B cell (primary cell): ENCODE measurements at regions of chr10 and their contacts with region 1.

Region 1: GRCh38 chr10:12048547-12048946 is 5.9 kb upstream of the UPF2 start:
- DNase-seq: no peak
- ATAC-seq: no peak
- H3K4me3 ChIP-seq: no peak overlapping the region
- H3K4me3 Mint-ChIP-seq: no peak overlapping the region
- H3K27ac ChIP-seq: no peak overlapping the region
- H3K27ac Mint-ChIP-seq: peak overlapping the region; percentile 39
- H3K4me1 ChIP-seq: peaks cover 25 to 44% of the 10 kb centered on the region in 2 donors
- H3K4me1 Mint-ChIP-seq: peaks cover 45% of the 10 kb centered on the region
- H3K27me3 ChIP-seq: no peaks in the 10 kb centered on the region
- H3K27me3 Mint-ChIP-seq: no peaks in the 10 kb centered on the region
- CTCF ChIP-seq: no peak

Region 2: DNA sequence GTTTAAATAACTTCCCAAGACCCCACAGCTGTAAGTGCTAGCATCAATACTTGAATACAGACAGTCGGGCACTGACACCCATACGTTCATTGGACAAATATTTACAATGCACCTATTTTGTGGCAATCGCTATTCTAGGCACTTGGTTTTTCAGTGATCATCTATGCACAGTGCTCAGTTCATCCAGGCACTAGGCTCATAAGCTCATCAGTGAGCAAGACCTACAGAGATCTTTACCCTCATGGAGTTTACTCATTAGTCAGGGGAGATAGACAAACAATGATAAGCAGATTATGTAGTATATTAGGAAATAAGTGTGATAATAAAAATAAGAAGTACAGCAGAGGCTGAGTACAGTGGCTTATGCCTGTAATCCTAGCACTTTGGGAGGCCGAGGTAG is 12.6 kb after region 1 on chr10:
- CTCF ChIA-PET with region 1: interaction called, 5 read pairs
- POLR2A ChIA-PET with region 1: interaction called, 14 read pairs
- intact Hi-C with region 1: no loop called
- DNase-seq: no peak
- ATAC-seq: no peak
- H3K4me3 ChIP-seq: no peak overlapping the region
- H3K4me3 Mint-ChIP-seq: no peak overlapping the region
- H3K27ac ChIP-seq: no peak overlapping the region
- H3K27ac Mint-ChIP-seq: no peak overlapping the region
- H3K4me1 ChIP-seq: no peaks in the 10 kb centered on the region
- H3K4me1 Mint-ChIP-seq: peaks cover 16% of the 10 kb centered on the region
- H3K27me3 ChIP-seq: no peaks in the 10 kb centered on the region
- H3K27me3 Mint-ChIP-seq: no peaks in the 10 kb centered on the region
- CTCF ChIP-seq: no peak